Activated CD4-positive, alpha-beta T cell treated with anti-CD3 and anti-CD28 coated beads, Interleukin-2, amount 10 ng/mL, durations not matched to agents 24 days and 14 days (primary cell): ENCODE measurements at regions of chr1 and their contacts with region 1.

Region 1: DNA sequence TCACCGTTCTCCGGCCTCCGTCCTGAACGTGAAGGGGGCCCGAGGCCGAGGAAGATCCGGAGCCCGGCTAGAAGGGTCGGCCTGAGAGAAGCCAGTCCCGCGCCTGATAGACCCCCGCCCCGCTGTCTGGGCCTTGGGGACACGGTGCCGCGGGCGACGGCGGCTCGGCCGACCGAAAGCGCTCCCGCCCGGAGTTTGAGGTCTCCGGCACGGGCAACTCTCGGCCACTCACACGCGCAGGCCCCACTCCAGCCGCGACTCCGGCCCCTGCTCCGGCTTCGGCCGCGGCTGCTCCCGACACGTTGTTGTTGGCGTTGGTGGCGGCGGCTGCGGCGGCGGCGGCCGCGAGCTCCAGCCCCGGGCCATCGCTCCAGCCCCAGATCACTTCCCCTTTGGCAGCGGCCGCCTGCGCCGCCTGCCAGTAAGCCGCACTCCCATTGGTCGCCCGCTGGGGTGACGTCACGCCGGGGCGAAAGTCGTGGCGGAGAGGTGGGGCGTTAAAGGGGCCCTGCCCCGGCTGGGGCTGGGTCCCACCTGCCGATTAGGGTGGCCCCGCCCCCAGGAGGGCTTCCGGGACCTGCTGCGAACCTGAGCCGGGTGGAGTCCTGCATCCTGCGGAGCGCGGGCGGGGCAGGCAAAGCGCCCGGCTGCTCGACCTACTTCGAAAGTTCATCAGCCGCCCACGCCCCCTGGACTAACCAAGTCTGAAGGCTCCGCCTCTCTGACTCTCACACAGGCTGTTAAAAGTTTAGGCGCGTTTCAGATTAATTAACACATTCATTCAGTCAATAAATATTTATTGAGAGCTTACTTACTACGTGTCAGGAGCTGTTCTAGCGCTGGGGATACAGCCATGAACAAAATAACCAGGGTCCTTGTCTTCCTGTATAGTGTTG is at the start of gene EFCAB14:
- DNase-seq: peak; percentile 100
- H3K4me3 Mint-ChIP-seq: peak within 1 kb of the TSS; percentile 95
- H3K27ac Mint-ChIP-seq: peak within 1 kb of the TSS; percentile 93
- H3K4me1 Mint-ChIP-seq: peaks cover 36% of the 10 kb centered on the region
- H3K27me3 Mint-ChIP-seq: no peaks in the 10 kb centered on the region
- total RNA-seq, gene EFCAB14: 63.9 and 70.4 TPM in 2 replicates

Region 2: GRCh38 chr1:46492871-46493270 is 226.1 kb before region 1 on chr1:
- intact Hi-C with region 1: no loop called
- DNase-seq: no peak
- H3K4me3 Mint-ChIP-seq: no peak overlapping the region
- H3K27ac Mint-ChIP-seq: no peak overlapping the region
- H3K4me1 Mint-ChIP-seq: peaks cover 22% of the 10 kb centered on the region
- H3K27me3 Mint-ChIP-seq: peaks cover 86% of the 10 kb centered on the region

Region 3: DNA sequence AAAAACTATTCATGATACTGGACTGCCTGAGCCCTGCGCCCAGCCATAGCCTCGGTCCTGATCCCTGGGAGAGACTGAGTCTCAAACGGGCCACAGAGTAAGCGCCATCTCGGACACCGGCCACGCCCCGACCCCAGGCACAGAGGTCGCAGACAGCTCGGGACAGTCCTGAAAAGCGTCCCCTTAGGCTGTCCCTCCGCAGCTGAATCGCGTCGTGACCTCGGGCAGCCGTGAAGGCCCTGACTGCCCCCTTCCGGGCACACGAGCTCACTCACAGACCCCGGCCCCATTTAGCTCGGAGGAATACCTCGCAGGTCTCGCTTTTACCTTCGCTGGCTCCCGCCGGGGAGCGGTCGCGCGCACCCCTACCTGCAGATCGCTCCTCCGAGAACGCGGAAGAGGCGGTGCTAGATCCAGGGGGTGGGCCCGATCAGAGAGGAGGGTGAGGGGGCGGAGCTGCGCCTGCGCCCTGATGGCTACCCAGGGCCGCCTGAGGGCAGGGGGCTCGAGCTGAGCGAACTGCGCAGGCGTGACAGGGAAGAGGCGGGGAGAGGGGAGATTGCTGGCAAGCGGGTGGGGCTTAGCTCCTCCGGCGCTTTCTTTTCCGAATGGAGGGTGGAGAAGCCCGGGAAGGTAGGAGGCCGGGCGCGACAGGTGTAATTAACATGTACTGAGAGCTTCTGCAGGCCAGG is 115.0 kb before region 1 on chr1 and contains the start of gene MKNK1:
- intact Hi-C with region 1: loop called (anchors 1 kb)
- DNase-seq: peak; percentile 100
- H3K4me3 Mint-ChIP-seq: peak within 1 kb of the TSS; percentile 92
- H3K27ac Mint-ChIP-seq: peak within 1 kb of the TSS; percentile 87
- H3K4me1 Mint-ChIP-seq: peaks cover 60% of the 10 kb centered on the region
- H3K27me3 Mint-ChIP-seq: no peaks in the 10 kb centered on the region
- total RNA-seq, gene MKNK1: 41.8 and 42.5 TPM in 2 replicates

Region 4: GRCh38 chr1:46622344-46622743 is 96.6 kb before region 1 on chr1:
- intact Hi-C with region 1: loop called (anchors 2 kb)
- DNase-seq: no peak
- H3K4me3 Mint-ChIP-seq: no peak overlapping the region
- H3K27ac Mint-ChIP-seq: no peak overlapping the region
- H3K4me1 Mint-ChIP-seq: peaks cover 22% of the 10 kb centered on the region
- H3K27me3 Mint-ChIP-seq: no peaks in the 10 kb centered on the region

Region 5: GRCh38 chr1:46667782-46668760 is 50.9 kb before region 1 on chr1 and contains the start of gene ATPAF1:
- intact Hi-C with region 1: loop called (anchors 1 kb)
- DNase-seq: peak; percentile 90
- H3K4me3 Mint-ChIP-seq: peak within 1 kb of the TSS; percentile 88
- H3K27ac Mint-ChIP-seq: peak within 1 kb of the TSS; percentile 59
- H3K4me1 Mint-ChIP-seq: peaks cover 18% of the 10 kb centered on the region
- H3K27me3 Mint-ChIP-seq: no peaks in the 10 kb centered on the region
- total RNA-seq, gene ATPAF1: 41.6 and 43.1 TPM in 2 replicates

Region 6: GRCh38 chr1:47313915-47314664 is 595.1 kb after region 1 on chr1 and contains the start of gene STIL:
- intact Hi-C with region 1: loop called (anchors 5 kb)
- DNase-seq: peak; percentile 99
- H3K4me3 Mint-ChIP-seq: peak within 1 kb of the TSS; percentile 91
- H3K27ac Mint-ChIP-seq: peak within 1 kb of the TSS; percentile 86
- H3K4me1 Mint-ChIP-seq: peaks cover 21% of the 10 kb centered on the region
- H3K27me3 Mint-ChIP-seq: no peaks in the 10 kb centered on the region
- total RNA-seq, gene STIL: 25.1 and 28.0 TPM in 2 replicates